CD8-positive, alpha-beta T cell (primary cell): ENCODE measurements at regions of chr9 and their contacts with region 1.

Region 1: GRCh38 chr9:15271403-15271802 is 35.6 kb downstream of the TTC39B start:
- DNase-seq: peak in 4 of 9 experiments; percentile 23 to 57 (median 52)
- ATAC-seq: peak; percentile 42
- H3K4me3 ChIP-seq: no peak overlapping the region
- H3K4me3 Mint-ChIP-seq: no peak overlapping the region
- H3K27ac ChIP-seq: no peak overlapping the region
- H3K27ac Mint-ChIP-seq: no peak overlapping the region
- H3K4me1 ChIP-seq: no peaks in the 10 kb centered on the region
- H3K4me1 Mint-ChIP-seq: peaks cover 48% of the 10 kb centered on the region
- H3K27me3 ChIP-seq: no peaks in the 10 kb centered on the region
- H3K27me3 Mint-ChIP-seq: no peaks in the 10 kb centered on the region
- CTCF ChIP-seq: no peak

Region 2: DNA sequence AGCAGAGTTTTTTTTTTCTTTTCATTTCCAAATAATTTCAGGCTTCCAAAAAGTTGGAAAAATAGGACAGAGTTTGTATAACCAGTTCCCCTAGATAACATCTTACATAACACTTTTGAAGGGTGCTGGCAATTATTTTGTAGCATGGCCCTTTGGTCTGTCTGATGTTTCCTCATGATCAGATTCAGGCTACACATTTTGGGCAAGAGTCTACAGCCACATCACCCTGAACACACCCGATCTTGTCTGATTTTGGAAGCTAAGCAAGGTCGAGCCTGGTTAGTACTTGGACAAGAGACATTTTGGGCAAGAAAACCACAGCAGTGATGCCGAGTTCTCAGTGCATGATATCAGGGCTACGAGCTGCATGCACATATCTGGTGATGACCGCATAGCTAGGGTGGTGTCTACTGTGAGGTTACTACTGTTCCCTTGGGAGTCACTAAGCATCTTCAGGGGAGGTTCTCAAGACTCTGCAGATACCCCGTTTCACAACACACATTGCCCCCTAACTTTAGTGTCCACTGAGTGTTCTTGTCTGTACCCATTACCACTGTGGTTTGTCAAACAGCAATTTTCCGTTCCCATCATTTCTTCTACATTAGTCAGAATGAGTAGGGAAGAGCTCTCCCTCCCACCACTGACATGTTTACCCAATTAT is 50.6 kb before region 1 on chr9:
- CTCF ChIA-PET with region 1: no interaction called
- POLR2A ChIA-PET with region 1: no interaction called
- intact Hi-C with region 1: loop called in 1 of 2 experiments (anchors 5 kb)
- DNase-seq: no peak
- ATAC-seq: no peak
- H3K4me3 ChIP-seq: no peak overlapping the region
- H3K4me3 Mint-ChIP-seq: no peak overlapping the region
- H3K27ac ChIP-seq: no peak overlapping the region
- H3K27ac Mint-ChIP-seq: peak overlapping the region; percentile 33
- H3K4me1 ChIP-seq: no peaks in the 10 kb centered on the region
- H3K4me1 Mint-ChIP-seq: peaks cover 6% of the 10 kb centered on the region
- H3K27me3 ChIP-seq: no peaks in the 10 kb centered on the region
- H3K27me3 Mint-ChIP-seq: no peaks in the 10 kb centered on the region
- CTCF ChIP-seq: no peak

Region 3: DNA sequence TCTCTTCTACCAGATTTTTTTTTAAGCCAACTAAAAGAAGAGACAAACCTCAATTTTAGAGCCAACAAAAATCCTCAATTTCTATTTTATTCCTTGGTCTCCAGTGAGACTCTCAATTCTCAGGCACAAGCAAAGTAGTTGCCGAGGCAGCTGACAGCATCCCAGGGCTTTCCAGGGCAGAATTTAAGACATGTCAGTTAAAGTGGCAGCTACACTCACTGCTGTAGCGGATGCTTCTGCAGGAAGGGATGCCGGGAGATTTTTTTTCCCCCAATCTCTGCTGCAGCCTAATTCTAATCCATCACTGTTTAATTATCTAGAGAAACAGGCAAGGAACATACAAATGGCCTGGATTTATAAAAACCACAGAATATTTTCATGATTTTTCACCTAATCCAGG is 21.4 kb before region 1 on chr9:
- CTCF ChIA-PET with region 1: no interaction called
- POLR2A ChIA-PET with region 1: no interaction called
- intact Hi-C with region 1: loop called in 1 of 2 experiments (anchors 1 kb)
- DNase-seq: no peak
- ATAC-seq: no peak
- H3K4me3 ChIP-seq: no peak overlapping the region
- H3K4me3 Mint-ChIP-seq: no peak overlapping the region
- H3K27ac ChIP-seq: no peak overlapping the region
- H3K27ac Mint-ChIP-seq: no peak overlapping the region
- H3K4me1 ChIP-seq: no peaks in the 10 kb centered on the region
- H3K4me1 Mint-ChIP-seq: peaks cover 60% of the 10 kb centered on the region
- H3K27me3 ChIP-seq: no peaks in the 10 kb centered on the region
- H3K27me3 Mint-ChIP-seq: no peaks in the 10 kb centered on the region
- CTCF ChIP-seq: no peak